ENCODE measurements at regions of chr1 and their contacts with region 1.

Region 1: DNA sequence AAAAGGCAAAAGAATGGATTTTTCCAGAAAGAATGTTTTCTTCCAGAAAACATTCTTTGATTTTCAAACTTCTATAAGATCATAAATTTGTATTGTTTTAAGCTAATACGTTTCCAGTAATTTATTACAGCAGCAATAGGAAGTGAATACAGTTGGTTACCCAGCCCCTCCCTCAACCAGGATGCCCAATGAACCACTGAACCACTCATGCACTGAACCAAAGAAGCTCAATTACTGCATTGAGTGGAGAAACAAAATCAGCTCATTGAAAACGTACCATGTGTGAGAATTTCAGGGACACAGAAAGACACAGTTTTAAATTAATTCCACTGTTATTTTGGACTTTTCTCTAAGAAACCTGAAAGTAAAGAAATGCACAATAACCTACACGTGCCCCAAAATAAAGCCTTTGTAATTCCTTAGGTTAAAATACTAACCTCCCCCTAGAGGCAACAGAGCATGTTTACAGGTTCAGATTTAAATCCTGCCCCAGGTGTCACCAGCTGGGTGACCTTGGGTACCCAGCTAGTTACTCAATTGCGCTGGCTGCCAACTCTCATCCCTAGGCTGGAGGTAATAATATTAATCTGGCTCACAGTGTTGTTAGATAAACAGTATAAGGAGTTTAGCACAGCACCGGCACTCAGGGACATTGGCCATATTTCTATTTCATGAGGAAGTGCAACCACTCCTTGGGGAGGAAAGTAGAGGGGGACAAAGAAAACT is 111.7 kb downstream of the NMNAT2 start:
- DNase-seq: peak; percentile 15
- H3K4me3 ChIP-seq: no peak overlapping the region
- H3K27ac ChIP-seq: no peak overlapping the region
- H3K4me1 ChIP-seq: no peaks in the 10 kb centered on the region
- H3K27me3 ChIP-seq: no peaks in the 10 kb centered on the region
- CTCF ChIP-seq: peak in 1 of 2 donors; percentile 18
- POLR2A ChIP-seq: no peak

Region 2: DNA sequence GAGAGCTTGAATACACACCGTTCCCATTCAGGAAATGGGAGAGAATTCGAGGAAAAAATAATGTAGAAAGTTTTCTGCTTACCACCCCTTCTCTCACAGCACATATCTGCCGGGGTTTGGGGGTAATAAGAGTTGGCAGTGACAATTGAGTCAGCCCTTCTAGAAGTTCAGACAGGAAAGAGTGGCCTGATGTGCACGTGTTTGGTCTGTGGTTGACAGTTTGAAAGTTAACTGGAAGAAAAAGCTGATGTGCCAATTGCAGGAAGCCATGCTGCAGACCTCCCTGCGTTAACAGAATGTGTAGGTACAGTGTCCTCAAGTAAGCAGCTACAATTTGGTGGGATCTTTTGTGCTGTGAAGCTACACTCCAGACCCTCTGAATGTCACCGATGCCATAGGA is 416.5 kb before region 1 on chr1:
- CTCF ChIA-PET with region 1: no interaction called
- POLR2A ChIA-PET with region 1: no interaction called
- dilution Hi-C with region 1: no loop called
- intact Hi-C with region 1: no loop called
- DNase-seq: no peak
- H3K4me3 ChIP-seq: no peak overlapping the region
- H3K27ac ChIP-seq: no peak overlapping the region
- H3K4me1 ChIP-seq: peaks cover 2% of the 10 kb centered on the region
- H3K27me3 ChIP-seq: no peaks in the 10 kb centered on the region
- CTCF ChIP-seq: no peak
- POLR2A ChIP-seq: peak; percentile 5

Region 3: DNA sequence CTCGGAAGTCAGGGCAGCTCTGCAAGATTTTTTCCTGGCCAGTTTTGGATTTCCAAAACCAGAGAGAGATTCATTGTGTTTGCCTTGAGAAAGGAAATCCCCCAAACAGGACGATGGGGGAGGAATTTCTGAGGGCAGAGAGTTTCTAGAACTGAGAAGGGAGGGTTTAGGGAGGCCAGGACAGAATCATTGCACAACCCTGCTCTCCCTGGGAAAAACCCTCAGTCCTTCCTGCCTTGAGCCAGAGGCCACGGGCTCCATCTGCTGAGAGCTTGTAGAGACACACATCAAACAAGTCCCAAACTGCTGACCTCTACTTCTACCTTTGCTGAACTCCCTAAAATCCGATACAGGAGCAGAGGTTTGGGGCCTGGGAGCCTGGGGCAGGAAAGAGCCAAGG is 12.0 kb after region 1 on chr1:
- CTCF ChIA-PET with region 1: interaction called, 12 read pairs
- POLR2A ChIA-PET with region 1: no interaction called
- dilution Hi-C with region 1: no loop called
- intact Hi-C with region 1: no loop called
- DNase-seq: peak; percentile 61
- H3K4me3 ChIP-seq: no peak overlapping the region
- H3K27ac ChIP-seq: no peak overlapping the region
- H3K4me1 ChIP-seq: no peaks in the 10 kb centered on the region
- H3K27me3 ChIP-seq: peaks cover 0 to 4% of the 10 kb centered on the region in 2 experiments
- CTCF ChIP-seq: peak; percentile 6 to 53
- POLR2A ChIP-seq: no peak